AG04449 (cell line): ENCODE measurements at regions of chr11 and their contacts with region 1.

Region 1: DNA sequence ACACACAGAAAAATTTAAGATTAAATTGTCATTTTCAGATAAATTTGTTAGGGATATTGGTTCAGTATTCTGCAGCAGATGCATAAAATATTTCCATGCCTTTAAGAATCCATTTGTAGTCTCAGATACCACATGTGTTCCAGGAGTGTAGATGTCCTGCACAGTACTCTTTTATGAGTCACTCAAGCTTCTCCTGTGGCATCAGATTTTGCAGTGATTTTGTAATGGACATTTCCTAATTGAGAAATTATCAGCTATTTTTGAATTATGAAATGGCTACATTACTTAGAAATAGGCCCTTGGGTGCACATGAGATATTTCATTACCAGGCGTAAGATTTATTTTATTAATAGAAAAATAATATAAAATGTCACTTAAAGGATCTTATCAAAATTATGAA is 18.9 kb downstream of the MMP3 start:
- DNase-seq: no peak
- H3K4me3 ChIP-seq: no peak overlapping the region
- CTCF ChIP-seq: no peak

Region 2: DNA sequence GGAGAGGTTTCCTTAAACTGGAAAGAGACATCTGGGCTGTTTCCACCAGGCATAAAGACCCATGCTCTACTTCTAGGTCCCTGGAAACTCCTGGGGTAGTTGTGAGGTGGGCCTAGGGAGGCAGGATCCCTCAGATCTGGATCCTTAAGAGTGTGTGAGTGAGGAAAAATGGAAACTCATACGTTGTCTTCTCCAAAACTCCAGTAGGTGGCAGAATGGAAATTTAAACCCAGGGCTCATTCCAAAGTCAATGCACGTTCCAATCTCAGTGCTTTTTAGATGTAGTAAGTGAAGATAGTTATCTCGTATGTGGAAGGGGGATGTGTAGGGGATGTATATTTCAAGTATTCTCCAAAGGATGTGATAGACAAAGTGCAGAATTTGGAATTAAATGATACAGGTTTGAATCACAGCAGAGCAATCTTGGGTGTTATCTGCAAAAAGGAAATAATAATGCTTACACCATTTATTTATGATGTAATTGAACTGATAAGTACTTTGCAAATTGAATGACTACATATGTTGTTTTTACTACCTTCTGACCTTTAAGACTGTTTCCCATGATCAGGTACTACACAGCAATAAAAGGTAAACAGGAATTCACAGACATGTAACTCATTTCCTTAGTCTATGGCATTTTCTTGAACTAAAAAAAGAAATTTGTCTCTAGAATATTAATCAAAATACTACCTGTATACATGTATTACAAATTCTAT is 13.5 kb before region 1 on chr11:
- CTCF ChIA-PET with region 1: interaction called, 19 read pairs
- POLR2A ChIA-PET with region 1: no interaction called
- DNase-seq: no peak
- H3K4me3 ChIP-seq: no peak overlapping the region
- CTCF ChIP-seq: peak; percentile 35

Region 3: DNA sequence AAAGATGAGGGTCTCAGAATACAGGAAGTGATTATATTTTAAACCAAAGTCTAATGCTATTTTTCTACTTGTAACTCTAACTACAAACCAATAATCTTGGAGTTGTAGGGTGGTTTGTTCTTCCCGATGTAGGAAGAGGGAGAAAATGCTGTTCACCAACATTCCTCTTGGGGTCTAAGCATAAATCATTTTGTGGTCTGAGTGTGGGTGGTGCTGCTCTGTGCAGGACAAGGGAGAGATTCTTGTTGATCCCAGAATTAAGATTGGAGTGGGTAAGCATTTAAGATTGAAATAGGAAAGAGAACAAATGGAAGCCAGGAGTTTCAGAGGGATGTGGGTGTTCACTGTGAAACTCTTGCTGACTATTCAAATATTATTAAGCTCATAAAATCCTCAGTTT is 169.5 kb after region 1 on chr11:
- CTCF ChIA-PET with region 1: no interaction called
- POLR2A ChIA-PET with region 1: no interaction called
- DNase-seq: no peak
- H3K4me3 ChIP-seq: no peak overlapping the region
- CTCF ChIP-seq: no peak

Region 4: DNA sequence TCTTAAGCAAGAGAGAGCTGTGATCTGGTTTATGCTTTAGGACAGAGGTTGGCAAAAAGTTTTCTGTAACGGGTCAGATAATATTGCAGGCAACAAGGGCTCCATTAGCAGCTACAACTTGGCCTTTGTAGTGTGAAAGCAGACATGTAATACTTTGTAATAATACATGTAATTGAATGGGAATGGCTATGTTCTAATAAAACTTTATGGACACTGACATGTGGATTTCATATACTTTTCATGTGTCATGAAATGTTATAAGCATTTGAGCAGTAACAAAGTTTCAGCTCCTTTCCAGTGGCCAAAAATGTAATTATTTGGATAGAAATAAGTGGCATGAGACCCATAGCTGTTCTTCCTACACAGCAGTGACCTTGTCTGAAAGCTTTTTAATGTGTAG is 287.8 kb after region 1 on chr11:
- CTCF ChIA-PET with region 1: no interaction called
- POLR2A ChIA-PET with region 1: no interaction called
- DNase-seq: no peak
- H3K4me3 ChIP-seq: no peak overlapping the region
- CTCF ChIP-seq: no peak